Esophagus muscularis mucosa (tissue), 4 donors: ENCODE measurements at regions of chr22 and their contacts with region 1.

Region 1: GRCh38 chr22:37686002-37686982 is at the start of gene NOL12:
- DNase-seq: peak; percentile 96
- H3K4me3 ChIP-seq: peak within 1 kb of the TSS; percentile 67 to 89 (median 79)
- H3K27ac ChIP-seq: peak within 1 kb of the TSS; percentile 77 to 92 (median 86)
- H3K4me1 ChIP-seq: peaks cover 22 to 37% (median 26%) of the 10 kb centered on the region in 4 donors
- H3K27me3 ChIP-seq: no peaks in the 10 kb centered on the region
- CTCF ChIP-seq: peak in 1 of 3 experiments; percentile 39
- EP300 ChIP-seq: no peak
- POLR2A ChIP-seq: no peak
- total RNA-seq, gene NOL12: 9.1 to 18.4 (median 14.5) TPM

Region 2: DNA sequence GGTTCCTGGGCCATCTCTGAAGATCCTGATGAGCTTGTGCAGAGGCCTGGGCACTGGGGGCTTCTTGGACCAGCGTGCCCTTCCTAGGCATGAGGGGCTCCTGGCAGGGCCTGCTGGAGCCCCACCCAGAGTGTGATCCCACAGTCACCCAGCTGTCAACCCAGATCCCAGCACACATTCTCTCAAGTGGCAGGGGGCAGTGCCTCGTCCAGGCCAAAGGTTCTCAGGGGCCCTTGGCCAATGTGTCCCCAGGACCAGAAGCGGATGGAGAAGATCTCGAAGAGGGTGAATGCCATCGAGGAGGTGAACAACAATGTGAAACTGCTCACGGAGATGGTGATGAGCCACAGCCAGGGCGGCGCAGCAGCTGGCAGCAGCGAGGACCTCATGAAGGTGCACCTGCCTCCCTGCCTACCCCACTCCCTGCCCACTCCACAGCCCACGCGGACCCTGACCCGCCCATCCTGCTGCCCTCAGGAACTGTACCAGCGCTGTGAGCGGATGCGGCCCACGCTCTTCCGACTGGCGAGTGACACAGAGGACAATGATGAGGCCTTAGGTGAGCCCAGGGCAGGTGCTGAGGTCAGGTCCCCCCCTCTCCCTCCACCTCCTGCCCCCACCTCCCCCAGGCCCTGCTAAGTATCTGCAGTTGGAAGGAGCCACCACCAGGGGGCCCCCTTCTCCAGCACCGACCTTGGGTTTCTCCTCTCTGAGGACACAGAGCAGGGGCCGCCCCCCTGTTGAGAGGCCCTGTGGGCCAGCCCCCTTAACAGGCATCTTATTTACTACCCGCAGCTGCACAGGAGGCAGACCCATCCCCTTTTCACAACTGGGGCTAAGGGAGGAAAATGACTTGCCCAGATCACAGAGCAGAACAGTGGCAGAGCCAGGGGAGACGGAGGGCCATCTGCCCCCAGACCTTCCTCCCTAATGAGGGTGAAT is 62.9 kb before region 1 on chr22:
- intact Hi-C with region 1: loop called (anchors 10 kb)
- DNase-seq: no peak
- H3K4me3 ChIP-seq: no peak overlapping the region
- H3K27ac ChIP-seq: peak overlapping the region in 2 of 4 donors; percentile 29 to 50
- H3K4me1 ChIP-seq: peaks cover 25 to 47% (median 36%) of the 10 kb centered on the region in 4 donors
- H3K27me3 ChIP-seq: no peaks in the 10 kb centered on the region
- CTCF ChIP-seq: peak; percentile 63 to 96 (median 88)
- EP300 ChIP-seq: no peak
- POLR2A ChIP-seq: no peak

Region 3: DNA sequence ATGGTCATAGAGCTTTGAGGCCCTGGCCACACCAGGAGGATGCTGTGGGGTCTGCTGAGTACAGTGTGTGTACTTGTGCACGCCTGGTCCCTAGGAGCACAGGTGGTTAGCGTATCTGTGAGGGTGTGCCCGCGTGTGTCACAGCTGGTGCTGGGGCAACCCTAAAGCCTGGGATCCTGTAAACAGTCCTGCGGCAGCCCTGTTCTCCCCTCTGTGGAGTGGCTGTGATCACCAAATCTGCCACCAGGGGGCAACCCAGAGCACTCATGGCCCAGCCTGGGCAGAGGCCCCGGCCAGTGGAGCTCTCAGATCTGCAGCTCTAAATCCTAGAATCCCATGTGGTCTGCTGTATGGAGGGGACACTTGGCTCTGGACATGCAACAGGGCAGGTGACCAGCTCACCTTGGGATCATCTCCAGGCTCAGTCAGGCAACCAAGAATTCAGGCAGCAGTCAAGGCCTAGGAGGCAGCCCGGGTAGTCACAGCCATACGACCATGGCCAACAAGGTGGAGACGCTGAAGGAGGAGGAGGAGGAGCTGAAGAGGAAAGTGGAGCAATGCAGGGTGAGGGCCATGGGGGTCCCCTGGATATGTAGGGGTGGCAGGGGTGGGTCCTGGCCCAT is 43.0 kb before region 1 on chr22:
- intact Hi-C with region 1: loop called (anchors 1 kb)
- DNase-seq: peak; percentile 95
- H3K4me3 ChIP-seq: no peak overlapping the region
- H3K27ac ChIP-seq: no peak overlapping the region
- H3K4me1 ChIP-seq: peaks cover 28 to 43% (median 34%) of the 10 kb centered on the region in 4 donors
- H3K27me3 ChIP-seq: peaks cover 3 to 35% (median 12%) of the 10 kb centered on the region in 4 donors
- CTCF ChIP-seq: peak; percentile 90 to 97 (median 91)
- EP300 ChIP-seq: no peak
- POLR2A ChIP-seq: no peak

Region 4: DNA sequence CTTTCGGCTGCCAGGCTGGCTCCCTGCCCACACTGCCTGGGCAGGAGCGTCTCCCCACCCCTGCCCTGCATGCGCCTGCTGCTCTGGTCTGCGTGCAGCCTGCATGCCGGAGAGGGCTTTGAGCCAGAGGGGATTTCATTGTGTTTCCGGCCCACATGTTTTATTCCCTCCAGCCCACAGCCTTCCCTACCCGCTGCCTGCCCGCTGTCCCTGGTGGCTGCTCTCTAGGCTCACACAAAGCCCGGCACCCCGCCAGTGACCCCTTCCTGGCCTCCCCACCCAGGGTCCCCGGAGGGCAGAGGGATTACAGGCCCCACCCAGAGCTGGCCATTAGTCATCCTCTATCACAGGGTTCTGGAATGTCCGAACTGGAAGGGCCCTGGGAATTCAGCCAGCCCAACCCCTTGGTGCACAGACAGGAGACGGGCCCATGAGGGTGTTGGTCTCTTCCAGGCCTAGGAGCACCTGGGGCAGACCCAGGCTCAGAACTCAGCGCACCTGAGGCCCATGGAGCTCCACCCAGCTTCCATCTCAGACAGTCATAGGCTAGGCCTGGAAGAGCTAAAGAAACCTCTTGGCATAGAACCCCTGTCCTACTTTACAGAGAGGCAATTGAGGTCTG is 66.3 kb after region 1 on chr22:
- intact Hi-C with region 1: loop called (anchors 5 kb)
- DNase-seq: peak; percentile 96
- H3K4me3 ChIP-seq: peak overlapping the region in 3 of 4 donors; percentile 13 to 18 (median 17)
- H3K27ac ChIP-seq: peak overlapping the region; percentile 90 to 96 (median 91)
- H3K4me1 ChIP-seq: peaks cover 70 to 80% (median 73%) of the 10 kb centered on the region in 4 donors
- H3K27me3 ChIP-seq: no peaks in the 10 kb centered on the region
- CTCF ChIP-seq: peak in 2 of 3 experiments; percentile 18 to 30
- EP300 ChIP-seq: no peak
- POLR2A ChIP-seq: no peak

Region 5: GRCh38 chr22:37797874-37798500 is 111.7 kb after region 1 on chr22:
- intact Hi-C with region 1: loop called (anchors 10 kb)
- DNase-seq: no peak
- H3K4me3 ChIP-seq: no peak overlapping the region
- H3K27ac ChIP-seq: no peak overlapping the region
- H3K4me1 ChIP-seq: peaks cover 8 to 13% (median 12%) of the 10 kb centered on the region in 4 donors
- H3K27me3 ChIP-seq: no peaks in the 10 kb centered on the region
- CTCF ChIP-seq: no peak
- EP300 ChIP-seq: no peak
- POLR2A ChIP-seq: no peak